MCF 10A (cell line): ENCODE measurements at regions of chr3 and their contacts with region 1.

Region 1: DNA sequence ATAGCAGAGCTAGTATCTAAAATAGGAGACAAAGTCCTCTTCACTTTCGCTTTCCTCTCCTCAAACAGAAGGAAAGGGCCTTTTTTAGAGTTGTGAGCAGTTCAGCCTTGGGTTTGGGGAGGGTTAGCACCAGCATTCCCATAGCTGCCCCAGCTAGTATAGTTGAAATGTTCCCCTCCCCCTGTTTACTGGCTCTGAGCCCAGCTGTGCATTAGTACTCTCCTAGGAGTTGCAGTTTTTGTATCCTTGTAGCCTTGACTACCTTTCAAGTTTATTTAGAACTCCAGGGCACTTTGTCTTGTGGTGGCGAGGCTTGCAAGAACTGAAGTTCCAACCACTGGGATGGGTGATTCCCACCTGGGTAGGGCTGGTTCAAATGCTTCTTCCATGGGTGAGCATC is 245.1 kb upstream of the NAALADL2 start:
- DNase-seq: peak; percentile 6
- H3K4me3 Mint-ChIP-seq: no peak overlapping the region
- H3K27ac Mint-ChIP-seq: no peak overlapping the region
- H3K4me1 Mint-ChIP-seq: no peaks in the 10 kb centered on the region
- H3K27me3 Mint-ChIP-seq: no peaks in the 10 kb centered on the region
- CTCF ChIP-seq: no peak

Region 2: DNA sequence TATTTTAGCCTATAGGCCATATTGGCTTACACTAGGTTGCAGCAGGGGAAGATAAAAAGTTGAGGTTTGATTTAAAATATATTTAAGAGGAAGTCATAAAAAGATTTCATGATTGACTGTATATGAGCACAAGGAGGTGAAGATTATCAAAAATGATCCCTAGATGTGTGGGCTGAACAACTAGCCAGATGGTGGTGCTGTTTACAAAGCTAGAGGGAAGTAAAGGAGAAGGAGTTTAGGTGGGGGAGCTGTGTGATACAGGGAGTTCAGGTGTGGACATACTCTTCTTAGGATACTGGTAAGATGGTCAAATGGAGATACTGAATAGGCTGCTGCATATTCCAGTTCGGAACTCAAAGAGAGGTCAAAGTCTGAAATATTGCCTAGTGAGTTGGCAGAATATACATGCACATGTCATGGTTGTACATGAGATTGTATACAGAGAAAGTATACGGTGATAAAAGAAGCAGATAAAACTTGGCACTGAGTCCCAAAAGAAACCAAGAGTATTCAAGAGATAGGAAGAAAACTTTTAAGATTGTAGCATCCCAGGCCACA is 488.7 kb before region 1 on chr3:
- CTCF ChIA-PET with region 1: no interaction called
- POLR2A ChIA-PET with region 1: no interaction called
- intact Hi-C with region 1: loop called (anchors 10 kb)
- DNase-seq: peak; percentile 57
- H3K4me3 Mint-ChIP-seq: no peak overlapping the region
- H3K27ac Mint-ChIP-seq: no peak overlapping the region
- H3K4me1 Mint-ChIP-seq: no peaks in the 10 kb centered on the region
- H3K27me3 Mint-ChIP-seq: no peaks in the 10 kb centered on the region
- CTCF ChIP-seq: peak; percentile 49

Region 3: DNA sequence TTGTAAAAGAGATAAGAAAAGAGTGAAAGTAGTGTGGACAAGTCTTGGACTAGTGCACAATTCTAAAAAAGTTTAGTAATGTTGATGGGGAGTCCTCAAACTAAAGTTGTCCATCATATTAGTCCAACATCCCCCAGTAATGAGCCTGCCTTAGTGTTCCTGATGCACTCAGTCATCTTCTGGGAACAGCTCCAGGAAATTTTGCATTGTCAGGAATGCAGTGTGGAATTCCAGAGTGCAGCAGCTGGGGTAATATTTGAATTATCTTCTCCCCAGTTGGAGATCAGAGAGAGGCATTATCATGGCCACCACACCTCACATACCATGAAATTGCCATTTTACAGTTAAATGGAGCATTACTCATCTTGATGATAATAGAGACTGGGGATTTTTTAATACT is 283.7 kb before region 1 on chr3:
- CTCF ChIA-PET with region 1: no interaction called
- POLR2A ChIA-PET with region 1: no interaction called
- intact Hi-C with region 1: no loop called
- DNase-seq: peak; percentile 46
- H3K4me3 Mint-ChIP-seq: no peak overlapping the region
- H3K27ac Mint-ChIP-seq: no peak overlapping the region
- H3K4me1 Mint-ChIP-seq: peaks cover 9% of the 10 kb centered on the region
- H3K27me3 Mint-ChIP-seq: no peaks in the 10 kb centered on the region
- CTCF ChIP-seq: no peak

Region 4: GRCh38 chr3:174417573-174417972 is 196.5 kb before region 1 on chr3:
- CTCF ChIA-PET with region 1: no interaction called
- POLR2A ChIA-PET with region 1: no interaction called
- intact Hi-C with region 1: no loop called
- DNase-seq: no peak
- H3K4me3 Mint-ChIP-seq: no peak overlapping the region
- H3K27ac Mint-ChIP-seq: no peak overlapping the region
- H3K4me1 Mint-ChIP-seq: no peaks in the 10 kb centered on the region
- H3K27me3 Mint-ChIP-seq: no peaks in the 10 kb centered on the region
- CTCF ChIP-seq: no peak